ENCODE measurements at regions of chr9 and their contacts with region 1.

Region 1: DNA sequence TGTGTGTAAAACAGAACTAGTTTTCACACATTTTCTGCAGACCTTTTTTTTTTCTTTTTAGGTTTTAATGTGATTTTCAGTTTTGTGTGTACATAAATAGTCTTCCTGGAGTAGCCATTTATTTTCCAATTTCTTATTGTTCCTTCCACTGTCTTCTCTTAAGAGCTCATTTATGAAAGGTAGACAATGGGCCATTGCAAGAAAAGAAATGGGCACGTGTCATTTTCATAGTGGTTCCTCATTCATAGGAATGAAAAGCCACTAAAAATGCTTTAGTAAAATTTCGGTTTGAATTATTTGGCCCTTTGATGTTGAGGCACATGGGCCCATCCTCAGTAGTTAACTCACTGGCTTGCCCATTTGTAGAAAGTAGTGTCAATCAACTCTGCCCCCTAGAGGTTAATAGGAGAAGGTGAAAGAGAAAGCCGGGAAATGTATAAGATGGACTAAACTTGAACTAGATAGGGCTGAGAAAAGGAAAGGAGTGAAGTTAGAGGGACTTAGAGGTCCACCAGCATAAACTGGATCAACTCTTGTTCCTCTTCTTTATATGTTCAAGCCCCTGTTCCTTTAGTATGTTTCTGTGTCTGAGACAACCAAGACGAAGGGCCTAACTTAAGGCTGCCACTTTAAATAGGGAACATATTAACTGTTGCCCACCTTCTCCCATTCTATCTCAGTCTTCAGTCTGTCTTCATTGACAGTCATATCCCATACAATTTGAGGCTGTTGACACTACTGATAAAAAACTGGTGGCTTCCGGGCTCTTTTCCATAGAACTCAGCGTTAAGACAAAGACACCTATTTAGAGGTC is 72.6 kb downstream of the SMARCA2 start:
- DNase-seq: no peak
- H3K4me3 Mint-ChIP-seq: no peak overlapping the region
- H3K27ac Mint-ChIP-seq: no peak overlapping the region
- H3K4me1 Mint-ChIP-seq: peaks cover 19% of the 10 kb centered on the region
- H3K27me3 Mint-ChIP-seq: no peaks in the 10 kb centered on the region

Region 2: DNA sequence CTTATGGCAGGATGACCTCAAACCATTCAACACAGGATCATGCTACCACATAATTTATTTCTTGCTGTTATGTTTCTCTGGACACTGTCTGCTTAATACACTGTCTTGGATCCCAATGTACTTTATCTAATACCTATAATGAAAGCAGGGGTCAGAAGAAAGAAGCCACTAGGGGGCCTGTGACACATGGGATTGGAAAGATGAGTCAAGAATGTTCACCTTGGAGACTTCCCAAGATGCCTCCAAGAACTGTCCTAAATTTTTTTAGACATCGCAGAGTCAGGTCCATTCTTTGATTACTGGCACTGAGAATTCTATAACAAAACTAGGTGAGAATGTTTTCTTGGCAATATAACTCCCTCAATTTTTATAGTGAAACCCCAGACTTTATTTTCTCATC is 378.4 kb before region 1 on chr9:
- intact Hi-C with region 1: loop called (anchors 5 kb)
- DNase-seq: no peak
- H3K4me3 Mint-ChIP-seq: no peak overlapping the region
- H3K27ac Mint-ChIP-seq: no peak overlapping the region
- H3K4me1 Mint-ChIP-seq: no peaks in the 10 kb centered on the region
- H3K27me3 Mint-ChIP-seq: peaks cover 5% of the 10 kb centered on the region

Region 3: GRCh38 chr9:1804128-1804865 is 283.4 kb before region 1 on chr9:
- intact Hi-C with region 1: loop called (anchors 10 kb)
- DNase-seq: no peak
- H3K4me3 Mint-ChIP-seq: no peak overlapping the region
- H3K27ac Mint-ChIP-seq: no peak overlapping the region
- H3K4me1 Mint-ChIP-seq: no peaks in the 10 kb centered on the region
- H3K27me3 Mint-ChIP-seq: no peaks in the 10 kb centered on the region

Region 4: DNA sequence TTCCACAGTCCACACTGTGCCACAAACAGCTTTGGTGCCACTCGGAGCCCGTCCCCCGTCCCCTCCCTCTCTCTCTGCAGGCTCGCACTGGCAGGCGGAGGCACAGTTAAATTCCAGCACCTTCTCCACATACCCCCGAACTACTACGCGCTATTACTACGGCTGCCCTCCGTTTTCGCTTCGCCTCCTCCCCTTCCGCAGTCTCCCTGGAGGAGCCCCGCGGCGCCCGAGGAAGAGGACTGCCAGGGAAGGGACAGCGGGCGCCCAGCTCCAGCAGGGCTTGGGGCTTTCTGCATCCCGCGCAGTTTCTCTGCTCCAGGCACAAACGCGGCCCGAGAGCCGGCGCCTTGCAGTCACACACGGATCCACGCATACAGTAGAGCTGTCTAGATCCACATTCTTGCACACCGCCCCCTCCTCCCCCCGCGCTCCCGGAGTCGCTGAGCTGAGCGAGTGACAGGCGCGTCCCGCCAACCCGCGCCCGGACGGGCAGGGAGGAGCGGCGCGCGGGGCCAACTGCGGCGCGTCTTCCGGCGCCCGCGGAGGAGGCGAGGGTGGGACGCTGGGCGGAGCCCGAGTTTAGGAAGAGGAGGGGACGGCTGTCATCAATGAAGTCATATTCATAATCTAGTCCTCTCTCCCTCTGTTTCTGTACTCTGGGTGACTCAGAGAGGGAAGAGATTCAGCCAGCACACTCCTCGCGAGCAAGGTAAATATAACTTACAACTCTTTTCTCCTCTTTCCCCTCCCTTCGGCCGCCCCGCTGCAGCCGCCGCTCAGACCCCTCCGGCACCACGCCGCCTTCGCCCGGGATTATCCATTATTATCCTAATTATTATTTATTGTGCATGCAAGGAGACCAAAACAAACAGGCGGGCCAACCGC is 72.8 kb before region 1 on chr9 and contains the start of gene SMARCA2:
- intact Hi-C with region 1: loop called (anchors 1 kb)
- DNase-seq: peak; percentile 97
- H3K4me3 Mint-ChIP-seq: peak within 1 kb of the TSS; percentile 99
- H3K27ac Mint-ChIP-seq: peak within 1 kb of the TSS; percentile 99
- H3K4me1 Mint-ChIP-seq: peaks cover 44% of the 10 kb centered on the region
- H3K27me3 Mint-ChIP-seq: peaks cover 5% of the 10 kb centered on the region
- total RNA-seq, gene SMARCA2: 105 and 108 TPM in 2 replicates